ENCODE measurements at regions of chr1 and their contacts with region 1.

Region 1: GRCh38 chr1:44377925-44378784 is 23.1 kb upstream of the ERI3 start:
- DNase-seq: peak; percentile 55
- CTCF ChIP-seq: peak; percentile 75

Region 2: GRCh38 chr1:43587594-43587993 is 790.6 kb before region 1 on chr1:
- in situ Hi-C with region 1: no loop called
- DNase-seq: no peak
- CTCF ChIP-seq: no peak

Region 3: DNA sequence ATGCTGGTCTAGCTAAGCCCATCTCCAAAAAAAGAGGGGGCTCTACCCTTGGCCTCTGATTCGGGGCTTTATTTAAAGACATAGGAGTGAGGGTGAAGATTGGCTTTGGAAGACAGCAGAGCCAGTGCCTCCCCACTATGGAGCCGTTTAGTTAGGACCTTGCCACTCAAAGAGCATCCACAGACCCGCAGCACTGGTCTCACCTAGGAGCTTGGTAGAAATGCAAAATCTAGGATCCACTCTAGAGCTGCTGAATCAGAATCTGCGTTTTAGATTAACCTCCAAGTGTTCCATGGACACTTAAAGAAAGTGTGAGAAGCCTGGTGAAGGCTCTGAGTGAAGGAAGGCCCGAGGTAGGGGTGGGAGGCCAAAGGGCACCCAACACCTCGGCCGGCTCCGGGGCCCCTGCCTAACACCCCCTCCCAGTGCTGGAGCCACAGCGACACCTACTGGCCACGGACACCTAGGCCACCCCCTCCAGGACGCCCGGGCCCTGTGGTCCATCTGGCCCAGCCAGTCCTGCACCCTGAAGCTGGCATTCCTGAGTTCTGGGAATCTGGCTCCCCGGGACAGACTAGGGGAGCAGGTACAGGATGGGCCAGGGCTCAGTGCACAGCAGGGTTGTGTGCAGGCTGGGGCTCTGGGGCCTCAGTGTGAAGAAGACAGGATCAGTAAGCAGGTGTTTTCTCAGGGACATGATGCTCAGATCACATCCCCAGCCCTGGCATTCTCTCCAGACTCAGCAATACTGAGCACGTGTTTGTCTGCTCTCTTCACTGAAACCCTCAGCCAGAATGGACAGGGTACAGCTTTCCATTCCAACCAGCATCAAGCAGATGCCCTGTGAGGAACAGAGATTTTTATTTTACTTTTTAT is 217.0 kb after region 1 on chr1:
- in situ Hi-C with region 1: loop called (anchors 10 kb)
- DNase-seq: peak; percentile 90
- CTCF ChIP-seq: peak; percentile 99

Region 4: GRCh38 chr1:44848456-44849181 is 470.5 kb after region 1 on chr1:
- in situ Hi-C with region 1: no loop called
- DNase-seq: no peak
- CTCF ChIP-seq: no peak

Region 5: GRCh38 chr1:44867801-44868200 is 489.6 kb after region 1 on chr1:
- in situ Hi-C with region 1: no loop called
- DNase-seq: no peak
- CTCF ChIP-seq: no peak

Measured in GM13977 (cell line).